ENCODE measurements at regions of chr3 and their contacts with region 1.

Region 1: GRCh38 chr3:69671082-69671952 is 67.9 kb upstream of the MITF start:
- DNase-seq: peak in 1 of 2 donors; percentile 51
- ATAC-seq: peak in 7 of 8 donors; percentile 55 to 86 (median 61)
- H3K4me3 ChIP-seq: no peak overlapping the region
- H3K27ac ChIP-seq: no peak overlapping the region
- H3K4me1 ChIP-seq: peaks cover 0 to 17% (median 11%) of the 10 kb centered on the region in 9 donors
- H3K27me3 ChIP-seq: no peaks in the 10 kb centered on the region
- CTCF ChIP-seq: peak; percentile 68 to 88 (median 82)

Region 2: GRCh38 chr3:69161587-69162307 is 509.6 kb before region 1 on chr3:
- intact Hi-C with region 1: loop called (anchors 2 to 10 kb)
- DNase-seq: peak in 1 of 2 donors; percentile 25
- ATAC-seq: peak in 7 of 8 donors; percentile 25 to 65 (median 56)
- H3K4me3 ChIP-seq: no peak overlapping the region
- H3K27ac ChIP-seq: no peak overlapping the region
- H3K4me1 ChIP-seq: peaks cover 0 to 8% (median 0%) of the 10 kb centered on the region in 9 donors
- H3K27me3 ChIP-seq: no peaks in the 10 kb centered on the region
- CTCF ChIP-seq: peak; percentile 83 to 100 (median 95)

Region 3: GRCh38 chr3:69324362-69325025 is 346.8 kb before region 1 on chr3:
- intact Hi-C with region 1: loop called in 6 of 10 experiments (anchors 5 to 10 kb)
- DNase-seq: no peak
- ATAC-seq: peak in 2 of 8 donors; percentile 59 to 63
- H3K4me3 ChIP-seq: no peak overlapping the region
- H3K27ac ChIP-seq: peak overlapping the region in 3 of 10 donors; percentile 41 to 82 (median 54)
- H3K4me1 ChIP-seq: peaks cover 0 to 99% (median 67%) of the 10 kb centered on the region in 9 donors
- H3K27me3 ChIP-seq: no peaks in the 10 kb centered on the region
- CTCF ChIP-seq: peak in 8 of 9 donors; percentile 30 to 66 (median 54)

Region 4: DNA sequence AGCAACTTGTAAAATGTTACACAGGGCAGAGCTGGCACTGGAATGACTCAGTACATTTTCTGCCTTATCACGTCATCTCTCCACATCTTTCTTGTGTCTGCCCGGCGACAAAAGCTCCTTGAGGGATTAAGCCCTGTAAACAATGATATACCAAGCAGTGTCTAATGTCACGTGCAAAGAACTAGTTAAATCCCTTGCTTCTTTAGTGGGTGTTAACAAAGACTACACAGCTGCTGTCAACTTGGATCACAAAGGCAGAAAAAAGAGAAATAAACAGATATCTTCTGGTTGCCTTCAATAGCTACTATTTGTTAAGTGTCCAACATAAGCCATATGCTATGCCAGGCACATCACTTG is 237.4 kb before region 1 on chr3:
- intact Hi-C with region 1: loop called in 4 of 10 experiments (anchors 5 kb)
- DNase-seq: no peak
- ATAC-seq: peak in 1 of 8 donors; percentile 13
- H3K4me3 ChIP-seq: no peak overlapping the region
- H3K27ac ChIP-seq: no peak overlapping the region
- H3K4me1 ChIP-seq: peaks cover 0 to 18% (median 3%) of the 10 kb centered on the region in 9 donors
- H3K27me3 ChIP-seq: no peaks in the 10 kb centered on the region
- CTCF ChIP-seq: no peak

Region 5: DNA sequence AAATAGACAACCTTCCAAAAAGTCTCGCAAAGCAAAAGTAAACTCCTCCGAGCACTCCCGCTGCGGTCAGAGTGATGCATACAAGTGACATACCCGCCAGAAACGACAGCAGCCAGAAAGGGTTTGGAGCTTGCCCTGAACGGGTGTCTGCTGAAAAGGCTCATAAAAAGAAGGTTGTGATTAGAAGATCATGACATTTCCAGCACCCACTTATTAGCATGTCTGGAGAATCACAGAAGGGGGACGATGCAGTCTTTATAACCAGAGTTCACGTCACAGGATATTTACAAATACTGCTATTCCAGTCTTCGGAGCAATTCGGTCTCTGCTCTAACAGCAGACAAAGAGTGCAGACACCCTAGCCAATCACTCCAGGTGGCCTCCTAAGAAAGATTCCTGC is 226.3 kb before region 1 on chr3:
- intact Hi-C with region 1: loop called in 8 of 10 experiments (anchors 5 to 10 kb)
- DNase-seq: no peak
- ATAC-seq: peak in 4 of 8 donors; percentile 11 to 57 (median 52)
- H3K4me3 ChIP-seq: peak overlapping the region in 7 of 10 donors; percentile 13 to 38 (median 30)
- H3K27ac ChIP-seq: no peak overlapping the region
- H3K4me1 ChIP-seq: peaks cover 0 to 10% (median 0%) of the 10 kb centered on the region in 9 donors
- H3K27me3 ChIP-seq: no peaks in the 10 kb centered on the region
- CTCF ChIP-seq: no peak

Measured in heart right ventricle (tissue), 16 donors.